ENCODE measurements at regions of chr13 and their contacts with region 1.

Region 1: DNA sequence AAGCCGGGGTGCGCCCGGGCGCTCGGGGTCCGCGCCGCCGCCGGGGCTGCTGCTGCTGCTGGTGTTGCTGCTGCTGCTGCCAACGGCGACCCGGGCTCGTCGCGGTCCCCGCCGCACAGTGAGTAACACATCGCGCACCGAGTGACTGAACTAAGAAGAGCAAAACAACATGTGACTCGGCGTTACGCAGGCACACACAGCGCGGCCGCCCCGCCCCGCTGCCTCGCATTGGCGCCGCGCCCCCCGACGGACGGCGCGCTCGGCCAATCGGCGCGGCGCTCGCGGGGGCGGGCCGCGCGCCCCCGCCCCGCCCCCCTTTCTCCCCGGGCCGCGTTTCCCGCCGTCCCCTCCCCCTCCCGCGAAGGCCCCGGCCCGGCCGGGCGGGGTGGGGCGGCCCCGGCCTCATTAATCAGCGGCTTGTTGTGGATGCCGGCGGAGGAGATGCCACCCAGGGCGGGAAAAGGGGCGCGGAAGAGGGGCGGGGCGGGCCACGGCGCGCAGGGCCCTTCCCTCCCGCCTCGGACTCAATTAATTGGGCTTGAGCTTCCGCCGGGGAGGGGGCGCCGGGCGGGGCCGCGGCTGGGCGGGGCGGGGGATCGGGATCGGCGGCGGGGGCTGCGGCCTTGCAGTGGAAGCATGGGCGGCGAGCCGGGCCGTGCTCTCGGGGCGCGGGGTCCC is at the start of gene IRS2:
- DNase-seq: peak; percentile 92
- H3K4me3 Mint-ChIP-seq: peak within 1 kb of the TSS; percentile 81
- H3K27ac Mint-ChIP-seq: peak within 1 kb of the TSS; percentile 73
- H3K4me1 Mint-ChIP-seq: peaks cover 26% of the 10 kb centered on the region
- H3K27me3 Mint-ChIP-seq: peaks cover 16% of the 10 kb centered on the region
- total RNA-seq, gene IRS2: 5.0 and 5.5 TPM in 2 replicates

Region 2: GRCh38 chr13:108915634-108916512 is 870.7 kb before region 1 on chr13:
- intact Hi-C with region 1: loop called (anchors 5 kb)
- DNase-seq: peak; percentile 73
- H3K4me3 Mint-ChIP-seq: peak overlapping the region; percentile 60
- H3K27ac Mint-ChIP-seq: peak overlapping the region; percentile 89
- H3K4me1 Mint-ChIP-seq: peaks cover 21% of the 10 kb centered on the region
- H3K27me3 Mint-ChIP-seq: peaks cover 15% of the 10 kb centered on the region

Region 3: DNA sequence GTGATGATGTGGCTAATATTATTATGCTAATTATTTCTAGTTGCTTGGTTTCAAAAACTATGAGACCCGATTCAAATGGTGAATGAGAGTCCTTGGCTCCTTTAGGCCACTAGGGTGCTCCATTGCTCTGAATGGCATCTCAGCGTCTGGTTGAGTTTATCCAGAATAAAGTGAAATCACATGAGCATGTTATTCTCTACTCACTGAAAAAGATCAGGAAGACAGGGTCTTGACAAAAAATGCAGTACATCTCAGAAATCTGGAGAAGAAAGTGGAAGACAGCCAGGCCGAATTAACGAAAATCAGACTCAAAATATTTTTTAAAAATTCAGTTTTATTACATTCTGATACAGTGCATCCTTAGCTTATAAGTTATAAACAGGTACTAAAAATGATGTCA is 641.0 kb before region 1 on chr13:
- intact Hi-C with region 1: loop called (anchors 10 kb)
- DNase-seq: no peak
- H3K4me3 Mint-ChIP-seq: no peak overlapping the region
- H3K27ac Mint-ChIP-seq: no peak overlapping the region
- H3K4me1 Mint-ChIP-seq: no peaks in the 10 kb centered on the region
- H3K27me3 Mint-ChIP-seq: peaks cover 18% of the 10 kb centered on the region

Region 4: DNA sequence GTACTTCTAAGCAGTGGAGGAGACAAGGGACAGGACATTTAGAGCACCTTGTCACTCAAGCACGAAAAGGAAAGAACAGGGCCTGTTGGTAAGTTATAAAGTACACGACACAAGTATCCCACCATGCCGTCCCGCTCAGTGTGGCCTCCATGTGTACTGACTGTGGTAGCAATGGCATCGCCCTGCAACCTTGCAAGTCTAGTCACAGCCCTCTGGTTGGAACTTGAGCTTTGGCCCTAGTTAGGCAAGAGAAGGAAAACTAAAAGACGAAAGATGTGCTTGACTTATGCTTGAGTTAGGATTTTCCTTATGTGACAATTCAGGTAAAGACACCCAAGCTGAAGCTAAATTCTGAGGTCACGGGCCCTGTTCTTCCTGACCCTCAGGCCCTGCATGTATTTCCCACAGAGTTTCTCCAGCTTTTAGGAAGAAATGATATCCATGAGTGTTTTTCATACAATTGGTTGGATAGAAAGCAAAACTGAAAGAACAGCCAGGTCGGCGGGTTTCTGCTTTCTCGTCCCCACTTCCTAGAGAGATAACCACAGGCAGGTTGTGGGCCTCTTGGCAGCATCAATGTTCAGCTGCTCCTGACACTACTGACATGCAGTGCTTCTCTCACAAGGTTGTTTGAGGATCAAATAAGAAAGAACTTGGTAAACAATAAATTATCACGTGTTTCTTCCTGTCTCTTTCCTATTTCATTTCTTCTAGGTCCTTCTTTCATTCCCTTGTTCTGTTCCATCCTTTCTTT is 216.5 kb before region 1 on chr13:
- intact Hi-C with region 1: loop called (anchors 10 kb)
- DNase-seq: peak; percentile 52
- H3K4me3 Mint-ChIP-seq: no peak overlapping the region
- H3K27ac Mint-ChIP-seq: no peak overlapping the region
- H3K4me1 Mint-ChIP-seq: peaks cover 15% of the 10 kb centered on the region
- H3K27me3 Mint-ChIP-seq: peaks cover 9% of the 10 kb centered on the region

Region 5: GRCh38 chr13:109773276-109773675 is 13.3 kb before region 1 on chr13:
- intact Hi-C with region 1: no loop called
- DNase-seq: no peak
- H3K4me3 Mint-ChIP-seq: no peak overlapping the region
- H3K27ac Mint-ChIP-seq: peak overlapping the region; percentile 21
- H3K4me1 Mint-ChIP-seq: peaks cover 32% of the 10 kb centered on the region
- H3K27me3 Mint-ChIP-seq: no peaks in the 10 kb centered on the region

Region 6: GRCh38 chr13:109840201-109840892 is 53.8 kb after region 1 on chr13:
- intact Hi-C with region 1: loop called (anchors 2 kb)
- DNase-seq: no peak
- H3K4me3 Mint-ChIP-seq: no peak overlapping the region
- H3K27ac Mint-ChIP-seq: no peak overlapping the region
- H3K4me1 Mint-ChIP-seq: peaks cover 12% of the 10 kb centered on the region
- H3K27me3 Mint-ChIP-seq: peaks cover 12% of the 10 kb centered on the region

Region 7: GRCh38 chr13:110615322-110616102 is 828.9 kb after region 1 on chr13 and contains the start of gene NAXD:
- intact Hi-C with region 1: loop called (anchors 10 kb)
- DNase-seq: peak; percentile 76
- H3K4me3 Mint-ChIP-seq: peak within 1 kb of the TSS; percentile 93
- H3K27ac Mint-ChIP-seq: peak within 1 kb of the TSS; percentile 95
- H3K4me1 Mint-ChIP-seq: peaks cover 26% of the 10 kb centered on the region
- H3K27me3 Mint-ChIP-seq: no peaks in the 10 kb centered on the region
- total RNA-seq, gene NAXD: 21.7 and 22.1 TPM in 2 replicates

Measured in activated T-helper 2 cell treated with anti-CD3 and anti-CD28 coated beads, Interferon-gamma antibody, Interleukin-2, Interleukin-4, amounts not matched to agents 10 μg/mL and 5 μg/mL and 100 μg/mL, durations not matched to agents 14 hours and 24 hours and 36 hours (primary cell).